ENCODE measurements at regions of chr19 and their contacts with region 1.

Region 1: DNA sequence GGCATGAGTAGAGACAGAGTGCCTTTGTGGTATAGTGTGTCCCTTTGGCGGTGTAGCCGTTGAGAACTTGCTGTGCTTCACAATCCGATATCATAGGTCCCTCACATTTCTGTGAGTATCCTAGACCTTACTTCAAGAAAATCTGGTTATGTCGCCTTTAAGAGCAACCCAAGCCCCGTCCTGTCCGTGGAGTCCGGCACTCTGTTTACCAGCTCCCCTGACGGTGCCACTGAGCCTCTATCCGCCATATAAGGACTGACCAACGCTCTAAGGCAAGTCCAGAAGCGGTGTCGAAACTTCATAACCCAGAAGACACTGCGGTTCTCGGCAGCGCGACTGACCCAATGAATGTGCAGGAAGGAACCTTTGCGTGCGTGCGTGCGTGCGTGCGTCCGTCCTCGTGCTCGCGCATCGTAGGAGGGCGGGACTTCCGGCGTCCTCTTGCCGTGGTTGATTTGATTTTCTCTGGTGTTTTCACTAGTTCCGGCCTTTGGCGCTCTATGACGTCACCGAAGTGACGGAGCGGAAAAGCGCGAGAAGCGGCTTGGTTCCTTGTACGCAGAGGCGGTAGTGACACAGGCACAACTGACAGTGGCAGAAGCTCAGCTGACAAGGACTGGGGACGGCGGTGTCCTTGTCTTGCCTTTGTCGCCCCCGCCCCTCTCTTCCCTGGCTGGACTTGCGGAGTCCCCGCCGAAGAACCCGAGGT is at the starts of genes TRAPPC2B and ZNF547:
- DNase-seq: peak; percentile 99
- H3K4me3 Mint-ChIP-seq: peak within 1 kb of the TSS; percentile 98
- H3K27ac Mint-ChIP-seq: peak within 1 kb of the TSS; percentile 99
- H3K4me1 Mint-ChIP-seq: peaks cover 8% of the 10 kb centered on the region
- H3K27me3 Mint-ChIP-seq: no peaks in the 10 kb centered on the region
- CTCF ChIP-seq: no peak
- total RNA-seq, gene TRAPPC2B: 6.3 and 9.8 TPM in 2 replicates
- total RNA-seq, gene ZNF547: 3.7 and 4.3 TPM in 2 replicates

Region 2: GRCh38 chr19:57191141-57192076 is 171.7 kb before region 1 on chr19 and contains the start of gene ZNF264:
- CTCF ChIA-PET with region 1: no interaction called
- POLR2A ChIA-PET with region 1: no interaction called
- intact Hi-C with region 1: loop called (anchors 1 kb)
- DNase-seq: peak; percentile 86
- H3K4me3 Mint-ChIP-seq: peak within 1 kb of the TSS; percentile 97
- H3K27ac Mint-ChIP-seq: peak within 1 kb of the TSS; percentile 96
- H3K4me1 Mint-ChIP-seq: peaks cover 22% of the 10 kb centered on the region
- H3K27me3 Mint-ChIP-seq: no peaks in the 10 kb centered on the region
- CTCF ChIP-seq: no peak
- total RNA-seq, gene ZNF264: 34.4 and 41.1 TPM in 2 replicates

Region 3: GRCh38 chr19:57279418-57280066 is 83.6 kb before region 1 on chr19:
- CTCF ChIA-PET with region 1: no interaction called
- POLR2A ChIA-PET with region 1: interaction called, 7 read pairs
- intact Hi-C with region 1: loop called (anchors 2 kb)
- DNase-seq: peak; percentile 99
- H3K4me3 Mint-ChIP-seq: no peak overlapping the region
- H3K27ac Mint-ChIP-seq: no peak overlapping the region
- H3K4me1 Mint-ChIP-seq: peaks cover 12% of the 10 kb centered on the region
- H3K27me3 Mint-ChIP-seq: no peaks in the 10 kb centered on the region
- CTCF ChIP-seq: no peak

Region 4: GRCh38 chr19:57334191-57334590 is 29.0 kb before region 1 on chr19:
- CTCF ChIA-PET with region 1: no interaction called
- POLR2A ChIA-PET with region 1: interaction called, 13 read pairs
- intact Hi-C with region 1: no loop called
- DNase-seq: peak; percentile 80
- H3K4me3 Mint-ChIP-seq: no peak overlapping the region
- H3K27ac Mint-ChIP-seq: peak overlapping the region; percentile 50
- H3K4me1 Mint-ChIP-seq: peaks cover 8% of the 10 kb centered on the region
- H3K27me3 Mint-ChIP-seq: no peaks in the 10 kb centered on the region
- CTCF ChIP-seq: no peak

Region 5: GRCh38 chr19:57350877-57351805 is 12.0 kb before region 1 on chr19 and contains the start of gene ZNF304:
- CTCF ChIA-PET with region 1: interaction called, 4 read pairs
- POLR2A ChIA-PET with region 1: interaction called, 29 read pairs
- intact Hi-C with region 1: no loop called
- DNase-seq: peak; percentile 98
- H3K4me3 Mint-ChIP-seq: peak within 1 kb of the TSS; percentile 90
- H3K27ac Mint-ChIP-seq: peak within 1 kb of the TSS; percentile 97
- H3K4me1 Mint-ChIP-seq: peaks cover 21% of the 10 kb centered on the region
- H3K27me3 Mint-ChIP-seq: no peaks in the 10 kb centered on the region
- CTCF ChIP-seq: no peak
- total RNA-seq, gene ZNF304: 7.0 and 9.9 TPM in 2 replicates

Region 6: DNA sequence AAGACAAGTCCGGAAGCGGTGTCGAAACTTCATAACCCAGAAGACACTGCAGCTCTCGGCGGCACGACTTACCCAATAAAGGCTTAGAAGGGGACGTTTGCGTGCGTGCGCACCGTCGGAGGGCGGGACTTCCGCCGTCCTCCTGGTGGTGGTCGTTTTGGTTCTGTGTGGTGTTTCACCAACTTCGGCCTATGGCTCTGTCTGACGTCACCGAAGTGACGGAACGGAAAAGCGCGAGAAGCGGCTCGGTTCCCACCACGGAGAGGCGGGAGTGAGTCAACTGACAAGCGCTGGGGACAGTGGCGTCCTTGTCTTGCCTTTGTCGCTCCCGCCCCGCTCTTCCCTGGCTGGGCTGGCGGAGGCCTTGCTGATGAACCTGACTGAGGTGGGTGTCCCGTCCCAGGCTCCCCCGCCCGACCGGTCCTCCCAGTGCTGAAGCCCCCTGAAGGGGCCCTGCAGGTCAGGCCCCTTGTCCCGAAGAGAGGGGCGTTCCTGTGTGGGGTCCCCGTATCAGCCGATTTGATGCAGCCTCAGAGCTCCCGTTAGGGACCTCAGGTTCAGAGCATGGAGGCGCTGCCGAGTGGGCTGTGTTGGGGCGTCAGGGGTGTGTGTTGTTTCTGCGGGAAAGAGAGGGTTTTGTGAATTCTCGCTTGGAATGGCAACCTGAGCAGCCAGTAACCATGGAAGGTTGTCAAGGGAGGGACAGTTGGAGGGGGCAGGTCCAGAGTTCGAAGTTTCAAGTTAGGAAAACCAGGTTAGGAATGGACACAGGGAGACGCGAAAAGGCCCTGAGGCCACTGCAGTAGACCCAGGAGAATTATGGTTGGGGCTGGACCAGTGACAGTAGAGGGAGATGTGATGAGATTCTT is 26.8 kb after region 1 on chr19 and contains the start of gene ZNF548:
- CTCF ChIA-PET with region 1: interaction called, 3 read pairs
- POLR2A ChIA-PET with region 1: interaction called, 17 read pairs
- intact Hi-C with region 1: no loop called
- DNase-seq: peak; percentile 97
- H3K4me3 Mint-ChIP-seq: peak within 1 kb of the TSS; percentile 88
- H3K27ac Mint-ChIP-seq: peak within 1 kb of the TSS; percentile 97
- H3K4me1 Mint-ChIP-seq: peaks cover 13% of the 10 kb centered on the region
- H3K27me3 Mint-ChIP-seq: no peaks in the 10 kb centered on the region
- CTCF ChIP-seq: no peak
- total RNA-seq, gene ZNF548: 23.7 and 40.1 TPM in 2 replicates

Region 7: GRCh38 chr19:57465495-57466395 is 102.6 kb after region 1 on chr19:
- CTCF ChIA-PET with region 1: no interaction called
- POLR2A ChIA-PET with region 1: no interaction called
- intact Hi-C with region 1: no loop called
- DNase-seq: peak; percentile 45
- H3K4me3 Mint-ChIP-seq: no peak overlapping the region
- H3K27ac Mint-ChIP-seq: no peak overlapping the region
- H3K4me1 Mint-ChIP-seq: no peaks in the 10 kb centered on the region
- H3K27me3 Mint-ChIP-seq: no peaks in the 10 kb centered on the region
- CTCF ChIP-seq: peak; percentile 51

Region 8: DNA sequence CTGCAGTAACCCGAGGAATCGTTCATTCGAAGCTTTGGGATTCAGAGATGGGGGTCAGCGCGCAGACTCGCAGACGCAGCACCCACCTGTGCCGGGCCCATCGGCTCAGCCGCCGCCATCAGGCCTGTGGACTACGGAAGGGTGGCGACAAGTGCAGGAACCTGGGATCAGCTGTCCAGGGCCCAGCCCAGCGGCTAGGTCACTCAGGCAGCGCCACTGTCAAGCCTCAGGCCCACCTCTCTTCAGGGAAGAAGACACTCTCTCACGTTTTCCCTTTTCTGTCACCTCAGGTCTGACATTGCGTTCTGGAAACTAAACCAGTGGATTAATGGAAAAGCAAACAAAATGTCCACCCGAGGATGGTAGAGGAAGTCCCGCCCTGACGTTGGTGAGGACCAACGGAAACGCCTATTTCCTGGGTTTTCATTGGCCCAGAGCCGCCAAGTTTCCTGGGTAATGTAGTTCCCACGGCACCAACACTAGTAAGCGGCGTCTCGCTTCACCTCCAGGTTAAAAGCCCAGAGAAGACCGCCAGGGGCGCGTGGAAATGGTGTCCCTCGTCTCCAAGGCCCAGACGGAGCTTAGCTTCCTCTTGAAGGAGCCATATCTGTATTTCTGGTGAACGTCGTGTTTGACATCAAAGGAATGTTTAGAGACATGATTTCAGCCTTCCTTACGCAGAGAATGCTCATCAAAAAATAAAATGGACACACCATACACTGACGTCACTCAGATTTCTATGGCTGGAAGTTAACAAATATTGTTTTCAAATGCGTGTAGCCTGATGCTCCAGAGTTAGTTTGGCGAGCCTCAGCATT is 114.2 kb after region 1 on chr19 and contains the start of gene ZNF772:
- CTCF ChIA-PET with region 1: no interaction called
- POLR2A ChIA-PET with region 1: no interaction called
- intact Hi-C with region 1: no loop called
- DNase-seq: peak; percentile 92
- H3K4me3 Mint-ChIP-seq: peak within 1 kb of the TSS; percentile 94
- H3K27ac Mint-ChIP-seq: peak within 1 kb of the TSS; percentile 89
- H3K4me1 Mint-ChIP-seq: no peaks in the 10 kb centered on the region
- H3K27me3 Mint-ChIP-seq: no peaks in the 10 kb centered on the region
- CTCF ChIP-seq: peak; percentile 53
- total RNA-seq, gene ZNF772: 9.9 and 10.9 TPM in 2 replicates